ENCODE measurements at regions of chr9 and their contacts with region 1.

Region 1: GRCh38 chr9:71966601-71967000 is 55.2 kb downstream of the C9orf85 start:
- DNase-seq: no peak
- ATAC-seq: no peak
- H3K4me3 ChIP-seq: no peak overlapping the region
- H3K27ac ChIP-seq: no peak overlapping the region
- H3K4me1 ChIP-seq: no peaks in the 10 kb centered on the region
- H3K27me3 ChIP-seq: no peaks in the 10 kb centered on the region
- CTCF ChIP-seq: no peak

Region 2: DNA sequence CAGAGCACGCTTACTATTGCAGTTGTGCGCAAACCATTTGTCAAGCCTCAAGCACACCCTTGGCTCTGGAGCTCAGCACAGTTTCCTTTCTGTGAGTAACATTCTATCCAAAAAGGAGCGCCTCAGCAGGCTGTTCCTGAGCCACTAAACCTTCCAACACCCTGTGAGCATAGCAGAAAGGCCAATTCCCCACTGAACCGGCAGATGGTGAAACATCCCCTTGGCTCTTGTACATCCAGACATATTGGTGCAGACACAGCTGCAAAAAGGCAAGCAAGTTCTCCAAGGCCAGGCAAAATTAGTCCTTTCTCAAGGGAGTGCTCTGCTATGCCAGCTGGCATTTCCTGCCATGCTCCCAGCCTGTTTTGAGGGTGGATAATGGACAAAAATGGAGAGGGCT is 154.2 kb before region 1 on chr9:
- intact Hi-C with region 1: loop called in 1 of 2 experiments (anchors 5 kb)
- DNase-seq: peak; percentile 56 to 79
- ATAC-seq: peak; percentile 67 to 82 (median 78)
- H3K4me3 ChIP-seq: no peak overlapping the region
- H3K27ac ChIP-seq: no peak overlapping the region
- H3K4me1 ChIP-seq: peaks cover 4% of the 10 kb centered on the region
- H3K27me3 ChIP-seq: no peaks in the 10 kb centered on the region
- CTCF ChIP-seq: no peak

Measured in psoas muscle (tissue), 8 donors.